Prostate gland (tissue), 2 donors: ENCODE measurements at regions of chr1 and their contacts with region 1.

Region 1: GRCh38 chr1:77978969-77979876 is at the start of gene FUBP1:
- DNase-seq: peak; percentile 96
- H3K4me3 ChIP-seq: peak within 1 kb of the TSS; percentile 65 to 70
- H3K27ac ChIP-seq: peak within 1 kb of the TSS; percentile 96 to 97
- H3K4me1 ChIP-seq: peaks cover 14% of the 10 kb centered on the region
- H3K27me3 ChIP-seq: no peaks in the 10 kb centered on the region
- CTCF ChIP-seq: peak in 3 of 4 experiments; percentile 57 to 82 (median 78)
- POLR2A ChIP-seq: peak; percentile 54
- total RNA-seq, gene FUBP1: 109 to 126 TPM

Region 2: GRCh38 chr1:77683160-77684148 is 295.8 kb before region 1 on chr1:
- intact Hi-C with region 1: loop called (anchors 5 kb)
- DNase-seq: peak; percentile 90
- H3K4me3 ChIP-seq: peak overlapping the region; percentile 59 to 86
- H3K27ac ChIP-seq: peak overlapping the region; percentile 84 to 94
- H3K4me1 ChIP-seq: no peaks in the 10 kb centered on the region
- H3K27me3 ChIP-seq: no peaks in the 10 kb centered on the region
- CTCF ChIP-seq: peak; percentile 66 to 96 (median 86)
- POLR2A ChIP-seq: peak; percentile 41

Region 3: GRCh38 chr1:77825131-77825709 is 154.0 kb before region 1 on chr1:
- intact Hi-C with region 1: loop called (anchors 10 kb)
- DNase-seq: peak; percentile 61
- H3K4me3 ChIP-seq: no peak overlapping the region
- H3K27ac ChIP-seq: no peak overlapping the region
- H3K4me1 ChIP-seq: no peaks in the 10 kb centered on the region
- H3K27me3 ChIP-seq: no peaks in the 10 kb centered on the region
- CTCF ChIP-seq: peak in 3 of 4 experiments; percentile 40 to 53 (median 53)
- POLR2A ChIP-seq: no peak

Region 4: DNA sequence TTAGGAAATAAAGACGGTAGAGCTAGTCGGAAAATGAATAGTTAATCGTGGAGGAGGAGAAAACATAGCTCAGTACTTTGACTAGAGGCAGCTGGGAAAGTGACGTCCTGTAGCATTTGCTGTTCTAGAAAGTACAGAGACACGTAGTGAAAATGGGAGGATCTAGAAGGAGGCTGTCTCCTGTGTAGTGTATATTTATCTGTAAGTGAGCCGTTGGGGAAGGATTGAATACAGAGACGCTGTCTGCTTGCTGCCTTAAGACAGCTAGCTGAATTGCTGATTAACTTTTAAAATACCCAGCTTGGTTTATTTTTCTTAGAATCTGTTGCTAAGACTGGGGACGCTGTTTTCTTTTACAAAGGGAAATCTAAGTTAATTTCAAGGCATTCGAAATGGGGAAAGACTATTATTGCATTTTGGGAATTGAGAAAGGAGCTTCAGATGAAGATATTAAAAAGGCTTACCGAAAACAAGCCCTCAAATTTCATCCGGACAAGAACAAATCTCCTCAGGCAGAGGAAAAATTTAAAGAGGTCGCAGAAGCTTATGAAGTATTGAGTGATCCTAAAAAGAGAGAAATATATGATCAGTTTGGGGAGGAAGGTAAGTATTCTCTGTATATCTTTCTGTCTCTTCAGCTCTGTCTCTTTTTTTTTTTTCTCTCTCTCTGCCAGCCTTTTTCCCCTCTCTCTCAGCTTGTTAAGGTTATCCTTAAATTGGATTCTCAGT is 25.7 kb after region 1 on chr1 and contains the start of gene DNAJB4:
- intact Hi-C with region 1: loop called (anchors 1 kb)
- DNase-seq: peak; percentile 83
- H3K4me3 ChIP-seq: peak within 1 kb of the TSS; percentile 33 to 35
- H3K27ac ChIP-seq: peak within 1 kb of the TSS; percentile 83 to 87
- H3K4me1 ChIP-seq: no peaks in the 10 kb centered on the region
- H3K27me3 ChIP-seq: no peaks in the 10 kb centered on the region
- CTCF ChIP-seq: no peak
- POLR2A ChIP-seq: peak; percentile 95
- total RNA-seq, gene DNAJB4: 15.8 to 22.8 TPM

Region 5: GRCh38 chr1:78045926-78046778 is 66.9 kb after region 1 on chr1 and contains the start of gene GIPC2:
- intact Hi-C with region 1: loop called (anchors 5 kb)
- DNase-seq: no peak
- H3K4me3 ChIP-seq: peak within 1 kb of the TSS; percentile 36 to 41
- H3K27ac ChIP-seq: peak within 1 kb of the TSS in 1 of 2 donors; percentile 27
- H3K4me1 ChIP-seq: no peaks in the 10 kb centered on the region
- H3K27me3 ChIP-seq: no peaks in the 10 kb centered on the region
- CTCF ChIP-seq: no peak
- POLR2A ChIP-seq: no peak
- total RNA-seq, gene GIPC2: 2.0 to 2.2 TPM

Region 6: GRCh38 chr1:78114034-78114956 is 135.1 kb after region 1 on chr1:
- intact Hi-C with region 1: loop called (anchors 5 kb)
- DNase-seq: peak; percentile 67
- H3K4me3 ChIP-seq: no peak overlapping the region
- H3K27ac ChIP-seq: no peak overlapping the region
- H3K4me1 ChIP-seq: no peaks in the 10 kb centered on the region
- H3K27me3 ChIP-seq: no peaks in the 10 kb centered on the region
- CTCF ChIP-seq: peak; percentile 63 to 91 (median 86)
- POLR2A ChIP-seq: no peak